ENCODE measurements at regions of chr9 and their contacts with region 1.

Region 1: GRCh38 chr9:19049917-19050636 is 850 bp downstream of the RRAGA start:
- DNase-seq: no peak
- ATAC-seq: peak; percentile 6

Region 2: GRCh38 chr9:19085295-19085694 is 35.2 kb after region 1 on chr9:
- intact Hi-C with region 1: loop called (anchors 2 kb)
- DNase-seq: no peak
- ATAC-seq: no peak

Region 3: DNA sequence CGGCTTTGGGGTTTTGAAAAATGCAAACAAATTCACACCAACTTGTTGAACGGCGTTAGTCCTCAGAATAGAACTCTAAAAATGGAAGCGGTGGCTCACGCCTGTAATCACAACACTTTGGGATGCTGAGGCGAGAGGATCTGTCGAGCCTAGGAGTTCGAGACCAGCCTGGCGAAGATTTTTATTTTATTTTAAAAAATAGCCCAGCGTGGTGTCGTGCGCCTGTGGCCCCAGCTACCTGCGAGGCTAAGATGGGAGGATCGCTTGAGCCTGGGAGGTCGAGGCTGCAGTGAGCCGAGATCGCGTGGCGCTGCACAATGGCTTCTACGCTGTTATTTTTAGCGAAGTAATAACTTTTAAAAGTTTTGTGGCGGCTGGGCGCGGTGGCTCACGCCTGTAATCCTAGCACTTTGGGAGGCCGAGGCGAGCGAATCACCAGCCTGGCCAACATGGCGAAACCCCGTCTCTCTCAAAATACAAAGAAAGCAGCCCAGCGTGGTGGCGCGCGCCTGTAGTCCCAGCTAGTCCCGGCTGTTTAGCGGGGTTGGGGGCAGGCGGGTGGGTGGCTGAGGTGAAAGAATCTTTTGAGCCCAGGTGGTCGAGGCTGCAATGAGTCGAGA is 77.9 kb after region 1 on chr9:
- intact Hi-C with region 1: no loop called
- DNase-seq: peak; percentile 70
- ATAC-seq: peak; percentile 42

Region 4: DNA sequence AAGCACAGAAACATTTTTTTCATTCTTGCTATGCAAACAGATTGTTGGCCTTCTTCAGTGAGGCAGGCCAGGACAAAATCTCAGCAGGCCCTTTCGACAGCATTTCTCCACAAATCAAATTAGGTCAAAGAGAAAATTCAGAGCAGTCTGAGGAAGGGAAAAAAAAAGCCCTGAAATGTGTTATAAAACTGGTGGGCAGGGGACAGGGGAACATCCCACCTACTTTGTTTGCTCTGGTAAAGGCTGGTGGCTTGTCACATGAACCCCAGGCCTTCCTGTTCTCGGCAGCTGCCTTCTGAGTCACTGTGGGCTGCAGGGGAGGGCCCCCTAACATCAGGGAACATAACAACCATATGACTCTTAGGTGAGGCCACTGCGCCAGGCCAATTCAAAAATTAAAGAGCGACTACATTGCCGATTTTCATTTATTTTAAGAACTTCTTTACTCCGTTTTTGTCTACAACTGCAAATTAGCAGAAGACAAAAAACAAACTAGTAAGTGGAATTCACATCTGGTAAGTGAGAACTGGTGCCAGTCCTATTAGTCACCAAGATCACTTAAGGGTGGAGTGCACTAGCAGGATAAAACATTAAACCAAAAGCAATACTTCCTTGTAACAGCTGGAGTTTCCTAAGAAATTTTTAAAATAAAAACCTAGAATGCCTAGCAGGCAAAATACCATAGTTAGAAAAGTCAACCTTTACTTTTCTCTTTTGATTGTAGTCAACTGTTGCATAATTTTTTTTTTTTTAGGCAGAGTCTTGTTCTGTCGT is 134.3 kb after region 1 on chr9:
- intact Hi-C with region 1: no loop called
- DNase-seq: peak; percentile 74
- ATAC-seq: peak; percentile 91